ENCODE measurements at regions of chr9 and their contacts with region 1.

Region 1: DNA sequence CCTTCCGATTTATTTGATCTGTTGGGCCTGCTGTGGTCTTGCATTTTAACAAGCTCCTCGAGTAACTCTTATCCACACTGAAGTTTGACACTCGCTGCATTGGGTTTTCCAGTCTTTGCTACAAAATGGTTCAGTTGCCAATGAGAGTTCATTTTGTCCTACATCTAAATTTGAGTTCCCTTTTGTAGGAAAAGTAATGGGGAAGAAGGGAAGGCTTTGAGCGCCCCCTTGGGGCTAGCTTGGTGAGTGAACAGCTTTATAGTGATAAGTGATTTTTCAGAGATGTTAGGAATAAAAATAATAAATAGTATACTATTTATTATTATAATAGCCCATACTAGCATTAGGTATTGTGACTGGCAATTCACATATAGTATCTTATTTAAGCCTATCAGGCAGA is 89.9 kb upstream of the GNAQ start:
- DNase-seq: peak; percentile 82
- H3K4me3 ChIP-seq: no peak overlapping the region
- H3K27ac ChIP-seq: no peak overlapping the region
- H3K4me1 ChIP-seq: peaks cover 4% of the 10 kb centered on the region
- H3K27me3 ChIP-seq: no peaks in the 10 kb centered on the region
- CTCF ChIP-seq: peak; percentile 83

Region 2: DNA sequence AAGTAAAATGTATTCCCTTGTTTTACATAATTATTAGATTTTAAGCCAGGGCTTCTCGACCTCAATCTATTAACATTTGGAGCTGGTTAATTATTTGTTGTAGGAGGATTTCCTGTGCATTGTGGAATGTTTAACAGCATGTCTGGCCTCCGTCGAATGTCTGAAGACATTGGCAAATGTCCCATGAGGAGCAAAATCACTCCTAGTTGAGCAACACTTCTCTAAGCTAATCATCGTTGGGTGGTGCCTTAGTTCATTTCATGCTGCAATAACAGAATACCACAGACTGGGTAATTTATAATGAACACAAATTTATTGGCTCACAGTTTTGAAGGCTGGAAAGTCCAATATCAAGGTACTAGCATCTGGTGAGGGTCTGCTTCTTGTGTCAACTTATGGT is 957.6 kb before region 1 on chr9:
- CTCF ChIA-PET with region 1: interaction called, 7 read pairs
- POLR2A ChIA-PET with region 1: no interaction called
- intact Hi-C with region 1: loop called (anchors 10 kb)
- DNase-seq: peak; percentile 89
- H3K4me3 ChIP-seq: no peak overlapping the region
- H3K27ac ChIP-seq: no peak overlapping the region
- H3K4me1 ChIP-seq: peaks cover 11% of the 10 kb centered on the region
- H3K27me3 ChIP-seq: peaks cover 30% of the 10 kb centered on the region
- CTCF ChIP-seq: no peak

Region 3: GRCh38 chr9:77433675-77434445 is 687.6 kb before region 1 on chr9:
- CTCF ChIA-PET with region 1: interaction called, 3 read pairs
- POLR2A ChIA-PET with region 1: no interaction called
- intact Hi-C with region 1: loop called (anchors 1 kb)
- DNase-seq: peak; percentile 90
- H3K4me3 ChIP-seq: no peak overlapping the region
- H3K27ac ChIP-seq: no peak overlapping the region
- H3K4me1 ChIP-seq: peaks cover 33% of the 10 kb centered on the region
- H3K27me3 ChIP-seq: peaks cover 3% of the 10 kb centered on the region
- CTCF ChIP-seq: peak; percentile 99

Region 4: GRCh38 chr9:77640741-77641580 is 480.5 kb before region 1 on chr9:
- CTCF ChIA-PET with region 1: no interaction called
- POLR2A ChIA-PET with region 1: no interaction called
- intact Hi-C with region 1: loop called (anchors 5 kb)
- DNase-seq: peak; percentile 96
- H3K4me3 ChIP-seq: no peak overlapping the region
- H3K27ac ChIP-seq: peak overlapping the region; percentile 99
- H3K4me1 ChIP-seq: peaks cover 63% of the 10 kb centered on the region
- H3K27me3 ChIP-seq: no peaks in the 10 kb centered on the region
- CTCF ChIP-seq: no peak

Region 5: GRCh38 chr9:77864211-77864889 is 257.1 kb before region 1 on chr9:
- CTCF ChIA-PET with region 1: no interaction called
- POLR2A ChIA-PET with region 1: no interaction called
- intact Hi-C with region 1: no loop called
- DNase-seq: no peak
- H3K4me3 ChIP-seq: no peak overlapping the region
- H3K27ac ChIP-seq: no peak overlapping the region
- H3K4me1 ChIP-seq: no peaks in the 10 kb centered on the region
- H3K27me3 ChIP-seq: no peaks in the 10 kb centered on the region
- CTCF ChIP-seq: no peak

Region 6: GRCh38 chr9:77977210-77977611 is 144.3 kb before region 1 on chr9:
- CTCF ChIA-PET with region 1: interaction called, 9 read pairs
- POLR2A ChIA-PET with region 1: no interaction called
- intact Hi-C with region 1: loop called (anchors 2 kb)
- DNase-seq: peak; percentile 76
- H3K4me3 ChIP-seq: no peak overlapping the region
- H3K27ac ChIP-seq: peak overlapping the region; percentile 5
- H3K4me1 ChIP-seq: peaks cover 71% of the 10 kb centered on the region
- H3K27me3 ChIP-seq: no peaks in the 10 kb centered on the region
- CTCF ChIP-seq: peak; percentile 71

Measured in A673 (cell line).